Vagina (tissue), 2 donors: ENCODE measurements at regions of chrX and their contacts with region 1.

Region 1: GRCh38 chrX:96445531-96446065 is 239.0 kb upstream of the DIAPH2 start:
- DNase-seq: no peak
- H3K4me3 ChIP-seq: no peak overlapping the region
- H3K27ac ChIP-seq: no peak overlapping the region
- H3K4me1 ChIP-seq: no peaks in the 10 kb centered on the region
- H3K27me3 ChIP-seq: no peaks in the 10 kb centered on the region
- CTCF ChIP-seq: no peak
- POLR2A ChIP-seq: no peak

Region 2: GRCh38 chrX:95367286-95367685 is 1078.3 kb before region 1 on chrX:
- intact Hi-C with region 1: loop called (anchors 5 kb)
- DNase-seq: no peak
- H3K4me3 ChIP-seq: no peak overlapping the region
- H3K27ac ChIP-seq: no peak overlapping the region
- H3K4me1 ChIP-seq: no peaks in the 10 kb centered on the region
- H3K27me3 ChIP-seq: no peaks in the 10 kb centered on the region
- CTCF ChIP-seq: no peak
- POLR2A ChIP-seq: no peak

Region 3: GRCh38 chrX:96480081-96480480 is 34.5 kb after region 1 on chrX:
- intact Hi-C with region 1: no loop called
- DNase-seq: no peak
- H3K4me3 ChIP-seq: no peak overlapping the region
- H3K27ac ChIP-seq: no peak overlapping the region
- H3K4me1 ChIP-seq: no peaks in the 10 kb centered on the region
- H3K27me3 ChIP-seq: no peaks in the 10 kb centered on the region
- CTCF ChIP-seq: no peak
- POLR2A ChIP-seq: no peak